ENCODE measurements at regions of chr20 and their contacts with region 1.

Region 1: GRCh38 chr20:53915446-53916172 is 154.8 kb downstream of the BCAS1 start:
- DNase-seq: peak; percentile 74
- H3K4me3 ChIP-seq: peak overlapping the region; percentile 60
- H3K27ac ChIP-seq: peak overlapping the region; percentile 61
- H3K27me3 ChIP-seq: no peaks in the 10 kb centered on the region
- CTCF ChIP-seq: peak; percentile 88

Region 2: DNA sequence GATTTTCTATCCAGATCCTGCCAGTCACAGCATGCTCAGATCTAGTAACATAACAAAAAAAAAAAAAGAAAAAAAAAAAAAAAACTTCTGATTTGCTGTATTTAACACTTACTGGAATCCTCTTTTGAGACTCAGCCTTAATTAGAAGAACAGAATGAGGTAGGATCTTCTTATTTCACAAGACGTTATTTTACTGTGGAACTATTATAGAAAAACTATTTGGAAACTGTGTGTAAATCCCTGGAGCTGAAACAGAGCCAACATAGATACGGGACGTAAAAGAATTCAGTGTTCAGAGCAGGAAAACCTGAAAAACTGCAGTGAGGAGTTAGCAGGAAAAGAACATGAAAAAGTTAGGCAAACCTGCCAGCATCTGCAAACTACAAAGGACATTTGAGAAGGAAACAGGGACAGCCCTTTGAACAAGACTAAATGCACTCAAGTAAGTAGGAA is 318.6 kb before region 1 on chr20:
- CTCF ChIA-PET with region 1: interaction called, 11 read pairs
- POLR2A ChIA-PET with region 1: interaction called, 4 read pairs
- DNase-seq: no peak
- H3K4me3 ChIP-seq: no peak overlapping the region
- H3K27ac ChIP-seq: no peak overlapping the region
- H3K27me3 ChIP-seq: no peaks in the 10 kb centered on the region
- CTCF ChIP-seq: no peak

Region 3: DNA sequence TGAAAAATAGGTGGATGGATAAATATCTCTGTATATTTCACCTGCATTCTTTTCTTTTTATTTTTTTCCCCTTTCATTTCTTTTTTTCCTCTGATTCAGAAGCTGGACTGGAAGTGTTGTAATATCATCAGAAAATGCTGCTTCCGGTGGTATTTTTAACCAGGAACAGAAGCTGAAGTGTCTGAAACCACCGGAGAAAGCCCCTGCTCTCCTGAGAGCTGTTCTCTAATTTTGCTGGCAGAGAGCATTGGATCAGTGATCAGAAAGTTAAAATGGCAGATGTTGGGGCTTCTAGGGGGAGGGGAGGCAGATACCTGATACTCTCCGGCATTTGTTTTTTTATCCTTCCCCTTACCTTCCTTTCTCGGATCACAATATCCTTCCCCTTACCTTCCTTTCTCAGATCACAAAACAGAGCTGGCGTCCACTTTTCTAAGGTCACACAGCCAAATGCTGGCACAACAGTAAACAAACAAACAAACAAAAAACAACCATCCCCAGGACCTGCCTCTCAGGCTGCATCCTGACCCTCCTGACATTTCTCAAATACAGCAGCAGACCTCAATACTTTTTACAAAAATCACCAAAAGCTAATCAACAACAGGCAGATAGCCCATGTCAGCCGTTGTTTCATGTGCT is 178.7 kb before region 1 on chr20:
- CTCF ChIA-PET with region 1: interaction called, 10 read pairs
- POLR2A ChIA-PET with region 1: no interaction called
- DNase-seq: no peak
- H3K4me3 ChIP-seq: no peak overlapping the region
- H3K27ac ChIP-seq: no peak overlapping the region
- H3K27me3 ChIP-seq: no peaks in the 10 kb centered on the region
- CTCF ChIP-seq: no peak

Region 4: DNA sequence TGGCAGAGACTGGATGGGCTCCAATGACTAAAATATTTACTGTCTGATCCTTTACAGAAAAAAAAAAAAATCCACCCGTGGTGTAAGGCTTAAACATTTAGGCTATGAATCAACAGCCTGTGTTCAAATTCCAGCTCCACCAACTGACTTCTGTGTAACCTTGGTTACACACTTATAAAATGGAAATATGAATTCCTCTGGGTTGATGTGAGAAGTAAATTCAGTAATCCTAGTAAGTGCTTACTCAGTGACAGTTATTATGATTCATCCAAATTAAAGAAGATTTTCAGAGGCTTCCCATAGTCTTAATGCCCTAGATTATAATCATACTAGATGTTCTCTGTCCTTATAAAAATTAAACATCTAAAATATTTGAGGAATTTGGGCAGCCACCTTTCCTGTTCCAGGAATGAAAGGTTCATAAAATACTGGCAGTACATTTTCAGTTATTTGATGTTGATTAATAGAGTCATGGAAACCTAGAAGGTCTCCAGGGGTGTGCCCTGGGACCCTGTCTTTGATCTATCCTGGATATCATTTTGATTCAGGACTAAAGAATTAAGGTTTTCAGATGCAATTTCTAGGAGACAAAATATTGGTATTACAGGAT is 141.7 kb before region 1 on chr20:
- CTCF ChIA-PET with region 1: interaction called, 13 read pairs
- POLR2A ChIA-PET with region 1: interaction called, 3 read pairs
- DNase-seq: peak; percentile 78
- H3K4me3 ChIP-seq: no peak overlapping the region
- H3K27ac ChIP-seq: peak overlapping the region; percentile 92
- H3K27me3 ChIP-seq: no peaks in the 10 kb centered on the region
- CTCF ChIP-seq: no peak

Region 5: DNA sequence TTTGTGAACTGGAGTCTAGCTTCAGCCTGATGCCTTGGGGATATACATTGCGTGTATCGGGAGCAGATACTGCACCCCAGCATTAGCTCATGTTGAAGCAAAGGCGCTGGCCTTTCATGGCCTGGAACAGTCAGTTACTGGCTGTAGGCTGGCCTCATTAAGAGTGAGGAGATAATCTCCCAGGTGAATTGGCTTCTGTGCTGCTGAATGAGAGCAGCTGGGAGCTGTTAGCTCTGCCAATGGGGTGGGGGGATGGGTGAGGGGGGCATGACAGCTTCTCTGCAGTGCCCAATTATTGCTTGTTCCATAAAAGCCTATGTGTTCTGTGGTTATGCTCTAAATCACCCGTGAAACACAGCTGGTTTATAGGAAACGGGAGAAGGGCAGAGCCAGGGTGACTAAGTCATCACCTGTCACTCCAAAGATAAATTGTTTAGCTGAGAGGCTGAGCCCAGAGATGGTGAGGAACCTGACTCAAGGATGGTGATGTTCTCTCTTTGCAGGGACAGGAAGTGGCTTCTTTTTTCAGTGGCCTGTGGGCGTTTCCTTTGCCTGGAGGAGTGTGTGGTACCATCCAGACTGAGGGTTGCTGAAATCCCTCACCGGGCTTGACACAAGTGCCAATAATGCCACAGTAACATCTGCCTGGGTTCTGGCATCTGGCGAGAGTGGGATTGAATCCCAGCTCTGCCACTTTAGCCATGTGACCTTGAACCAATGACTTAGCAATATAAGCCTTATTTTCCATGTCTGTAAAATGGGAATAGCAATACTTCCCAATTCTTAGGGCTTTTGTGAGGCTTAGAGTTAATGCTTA is 16.1 kb before region 1 on chr20:
- CTCF ChIA-PET with region 1: interaction called, 30 read pairs
- POLR2A ChIA-PET with region 1: interaction called, 5 read pairs
- DNase-seq: no peak
- H3K4me3 ChIP-seq: no peak overlapping the region
- H3K27ac ChIP-seq: peak overlapping the region; percentile 49
- H3K27me3 ChIP-seq: no peaks in the 10 kb centered on the region
- CTCF ChIP-seq: no peak

Region 6: DNA sequence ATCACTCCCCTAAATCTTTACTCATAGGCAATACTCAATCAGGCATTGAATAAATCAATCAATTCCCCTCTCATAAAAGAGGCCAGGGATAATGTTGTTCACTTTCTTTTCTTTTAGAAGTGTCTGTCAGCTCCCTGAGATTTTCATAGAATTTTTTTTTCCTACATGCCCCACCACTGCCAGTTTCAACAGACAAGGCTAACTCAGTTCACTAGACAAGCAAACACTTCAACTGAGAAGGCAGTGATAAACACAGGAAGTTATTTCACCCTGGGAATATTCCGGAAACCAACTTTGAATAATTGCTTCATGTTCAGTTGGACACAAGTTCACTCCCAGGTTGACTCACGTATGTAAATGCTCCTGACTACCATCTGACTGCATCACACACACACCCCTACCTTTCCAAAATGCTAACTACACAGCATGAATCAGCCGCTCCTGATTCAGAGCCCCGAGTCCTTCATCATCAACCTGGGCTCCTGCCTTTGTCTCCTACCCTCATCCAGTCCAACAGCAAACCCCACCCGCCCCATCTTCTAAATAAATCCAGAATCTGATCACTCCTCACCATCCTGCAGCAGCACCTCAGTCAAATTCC is 10.9 kb after region 1 on chr20:
- CTCF ChIA-PET with region 1: interaction called, 17 read pairs
- POLR2A ChIA-PET with region 1: no interaction called
- DNase-seq: no peak
- H3K4me3 ChIP-seq: no peak overlapping the region
- H3K27ac ChIP-seq: peak overlapping the region; percentile 71
- H3K27me3 ChIP-seq: no peaks in the 10 kb centered on the region
- CTCF ChIP-seq: 0 out of 2 replicates have a peak, but pooled peaks have one; percentile 1

Region 7: DNA sequence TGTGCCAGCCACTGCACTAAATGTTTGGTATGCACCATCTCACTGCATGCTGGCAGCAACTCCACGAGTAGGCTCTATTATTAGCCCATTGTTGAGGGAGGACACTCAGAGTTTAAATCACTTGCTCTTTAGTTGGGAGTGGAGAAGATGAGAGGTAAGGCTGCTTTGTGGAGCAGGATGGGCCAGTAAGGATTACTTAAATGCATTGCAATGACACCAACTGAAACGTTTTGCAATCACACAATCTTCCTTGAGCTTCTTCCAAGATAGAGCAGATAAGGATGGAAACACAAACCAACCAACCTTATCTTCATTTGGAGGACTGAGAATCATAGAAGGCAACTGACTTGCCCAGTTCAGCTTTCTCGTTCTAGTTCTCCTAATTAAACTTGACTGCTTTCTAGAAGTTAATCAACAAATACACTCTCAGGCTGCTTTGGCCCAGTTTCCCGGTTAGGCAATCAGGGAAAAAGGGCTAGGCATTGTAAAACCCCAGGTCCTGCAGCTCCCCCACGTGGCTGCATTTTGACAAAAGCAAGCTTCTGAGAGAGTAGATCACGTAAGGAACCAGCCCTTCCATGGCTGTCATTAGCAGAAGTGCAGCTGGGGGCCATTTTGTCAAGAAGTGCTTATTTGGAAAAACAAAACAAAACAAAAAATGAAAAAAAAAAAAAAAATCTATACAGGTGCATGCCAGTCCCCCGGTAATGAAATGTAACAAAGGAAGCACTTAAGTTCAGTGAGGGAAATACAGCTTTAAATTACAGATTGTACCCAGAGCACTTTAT is 24.2 kb after region 1 on chr20:
- CTCF ChIA-PET with region 1: interaction called, 38 read pairs
- POLR2A ChIA-PET with region 1: no interaction called
- DNase-seq: peak; percentile 84
- H3K4me3 ChIP-seq: no peak overlapping the region
- H3K27ac ChIP-seq: no peak overlapping the region
- H3K27me3 ChIP-seq: no peaks in the 10 kb centered on the region
- CTCF ChIP-seq: peak; percentile 80